ENCODE measurements at regions of chr12 and their contacts with region 1.

Region 1: GRCh38 chr12:108193917-108194316 is 64.8 kb downstream of the WSCD2 start:
- DNase-seq: peak in 5 of 9 experiments; percentile 7 to 32 (median 17)
- ATAC-seq: no peak
- H3K4me3 ChIP-seq: no peak overlapping the region
- H3K4me3 Mint-ChIP-seq: no peak overlapping the region
- H3K27ac ChIP-seq: no peak overlapping the region
- H3K27ac Mint-ChIP-seq: no peak overlapping the region
- H3K4me1 ChIP-seq: no peaks in the 10 kb centered on the region
- H3K4me1 Mint-ChIP-seq: no peaks in the 10 kb centered on the region
- H3K27me3 ChIP-seq: no peaks in the 10 kb centered on the region
- H3K27me3 Mint-ChIP-seq: peaks cover 17% of the 10 kb centered on the region
- CTCF ChIP-seq: peak; percentile 57

Region 2: DNA sequence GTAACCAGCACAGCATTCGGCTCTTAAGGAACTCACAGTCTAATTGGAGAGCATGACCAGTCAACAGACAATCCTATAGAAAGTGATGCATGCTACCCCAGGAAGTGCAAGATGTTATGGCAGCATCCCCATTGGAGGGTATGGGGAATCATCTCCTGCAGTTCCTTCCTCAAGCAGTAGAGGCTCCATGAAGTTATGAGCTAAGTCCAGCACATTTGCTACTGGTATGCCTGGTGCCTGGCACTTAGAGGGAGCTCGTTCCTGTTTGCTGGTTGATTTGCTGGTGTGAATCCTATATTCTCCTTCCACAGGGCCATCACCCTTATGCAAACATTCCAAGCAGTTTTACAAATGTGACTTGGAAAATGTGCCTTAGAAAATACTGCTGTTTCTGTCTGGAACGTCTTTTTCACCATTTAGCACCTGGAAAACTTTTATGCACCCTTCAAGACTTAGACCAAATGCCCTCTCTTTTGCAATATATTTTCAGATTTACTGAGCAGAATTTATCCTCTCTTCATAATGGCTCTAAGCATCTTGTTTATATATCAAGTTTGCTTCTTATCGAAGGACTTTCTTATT is 201.0 kb before region 1 on chr12:
- CTCF ChIA-PET with region 1: interaction called, 11 read pairs
- POLR2A ChIA-PET with region 1: no interaction called
- intact Hi-C with region 1: loop called in 1 of 2 experiments (anchors 2 kb)
- DNase-seq: peak in 2 of 9 experiments; percentile 8 to 12
- ATAC-seq: no peak
- H3K4me3 ChIP-seq: no peak overlapping the region
- H3K4me3 Mint-ChIP-seq: no peak overlapping the region
- H3K27ac ChIP-seq: no peak overlapping the region
- H3K27ac Mint-ChIP-seq: no peak overlapping the region
- H3K4me1 ChIP-seq: no peaks in the 10 kb centered on the region
- H3K4me1 Mint-ChIP-seq: no peaks in the 10 kb centered on the region
- H3K27me3 ChIP-seq: no peaks in the 10 kb centered on the region
- H3K27me3 Mint-ChIP-seq: peaks cover 17% of the 10 kb centered on the region
- CTCF ChIP-seq: no peak

Region 3: GRCh38 chr12:108180255-108181094 is 13.4 kb before region 1 on chr12:
- CTCF ChIA-PET with region 1: interaction called, 15 read pairs
- POLR2A ChIA-PET with region 1: no interaction called
- intact Hi-C with region 1: no loop called
- DNase-seq: no peak
- ATAC-seq: no peak
- H3K4me3 ChIP-seq: no peak overlapping the region
- H3K4me3 Mint-ChIP-seq: no peak overlapping the region
- H3K27ac ChIP-seq: no peak overlapping the region
- H3K27ac Mint-ChIP-seq: no peak overlapping the region
- H3K4me1 ChIP-seq: no peaks in the 10 kb centered on the region
- H3K4me1 Mint-ChIP-seq: no peaks in the 10 kb centered on the region
- H3K27me3 ChIP-seq: no peaks in the 10 kb centered on the region
- H3K27me3 Mint-ChIP-seq: no peaks in the 10 kb centered on the region
- CTCF ChIP-seq: no peak